GM12878 (cell line): ENCODE measurements at regions of chr6 and their contacts with region 1.

Region 1: DNA sequence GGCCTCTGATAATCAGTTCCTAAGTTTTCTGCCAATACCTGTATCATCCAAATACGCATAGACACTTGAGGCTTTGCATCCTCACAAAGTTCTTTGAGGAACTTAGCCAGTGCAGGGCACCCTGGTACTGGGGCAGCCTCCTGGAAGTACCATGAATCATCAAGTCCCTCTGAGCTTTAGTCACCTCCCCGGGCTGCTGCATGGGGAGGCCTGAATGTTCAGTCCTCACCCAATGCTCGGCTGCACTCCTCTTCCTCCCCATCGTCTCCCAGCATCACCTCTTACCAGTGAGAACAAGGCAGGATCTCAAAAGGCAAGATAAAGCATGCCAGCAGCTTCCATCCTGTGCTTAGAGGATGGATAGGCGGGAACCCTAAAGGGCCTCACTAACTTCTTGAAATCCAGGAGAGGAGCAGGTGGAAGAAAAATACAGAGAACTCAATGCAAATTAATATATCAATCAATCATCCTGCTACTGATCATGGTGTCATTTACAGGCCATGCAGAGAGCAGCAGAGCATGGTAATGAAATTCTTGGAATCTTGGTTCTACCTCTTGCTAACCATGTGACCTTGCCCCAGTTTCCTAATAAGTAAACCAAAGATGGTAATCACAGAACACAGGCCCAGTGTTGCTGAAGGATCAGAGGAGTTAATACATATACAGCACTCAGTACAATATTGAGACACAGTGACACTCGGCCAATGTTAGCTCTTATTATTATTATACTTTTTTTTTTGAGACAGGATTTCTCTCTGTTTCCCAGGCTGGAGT is 4.7 kb upstream of the CCN6 start:
- DNase-seq: no peak
- ATAC-seq: no peak
- H3K4me3 ChIP-seq: no peak overlapping the region
- H3K27ac ChIP-seq: no peak overlapping the region
- H3K4me1 ChIP-seq: no peaks in the 10 kb centered on the region
- H3K27me3 ChIP-seq: no peaks in the 10 kb centered on the region
- CTCF ChIP-seq: no peak
- EP300 ChIP-seq: no peak
- POLR2A ChIP-seq: no peak
- RAD21 ChIP-seq: no peak

Region 2: GRCh38 chr6:112038268-112038667 is 10.9 kb before region 1 on chr6:
- CTCF ChIA-PET with region 1: interaction called, 12 read pairs
- POLR2A ChIA-PET with region 1: no interaction called
- RAD21 ChIA-PET with region 1: interaction called, 8 read pairs
- SMC1A ChIA-PET with region 1: interaction called, 3 read pairs
- in situ Hi-C with region 1: no loop called
- intact Hi-C with region 1: no loop called
- DNase-seq: no peak
- ATAC-seq: no peak
- H3K4me3 ChIP-seq: no peak overlapping the region
- H3K27ac ChIP-seq: no peak overlapping the region
- H3K4me1 ChIP-seq: no peaks in the 10 kb centered on the region
- H3K27me3 ChIP-seq: no peaks in the 10 kb centered on the region
- CTCF ChIP-seq: no peak
- EP300 ChIP-seq: no peak
- POLR2A ChIP-seq: no peak
- RAD21 ChIP-seq: no peak

Region 3: GRCh38 chr6:112282221-112282620 is 233.0 kb after region 1 on chr6:
- CTCF ChIA-PET with region 1: no interaction called
- POLR2A ChIA-PET with region 1: no interaction called
- RAD21 ChIA-PET with region 1: no interaction called
- SMC1A ChIA-PET with region 1: no interaction called
- in situ Hi-C with region 1: no loop called
- intact Hi-C with region 1: no loop called
- DNase-seq: no peak
- ATAC-seq: no peak
- H3K4me3 ChIP-seq: no peak overlapping the region
- H3K27ac ChIP-seq: no peak overlapping the region
- H3K4me1 ChIP-seq: no peaks in the 10 kb centered on the region
- H3K27me3 ChIP-seq: peaks cover 0 to 2% of the 10 kb centered on the region in 2 experiments; a peak in 1 of 4 replicates
- CTCF ChIP-seq: no peak
- EP300 ChIP-seq: no peak
- POLR2A ChIP-seq: no peak
- RAD21 ChIP-seq: no peak